Heart right ventricle (tissue), 16 donors: ENCODE measurements at regions of chrX and their contacts with region 1.

Region 1: DNA sequence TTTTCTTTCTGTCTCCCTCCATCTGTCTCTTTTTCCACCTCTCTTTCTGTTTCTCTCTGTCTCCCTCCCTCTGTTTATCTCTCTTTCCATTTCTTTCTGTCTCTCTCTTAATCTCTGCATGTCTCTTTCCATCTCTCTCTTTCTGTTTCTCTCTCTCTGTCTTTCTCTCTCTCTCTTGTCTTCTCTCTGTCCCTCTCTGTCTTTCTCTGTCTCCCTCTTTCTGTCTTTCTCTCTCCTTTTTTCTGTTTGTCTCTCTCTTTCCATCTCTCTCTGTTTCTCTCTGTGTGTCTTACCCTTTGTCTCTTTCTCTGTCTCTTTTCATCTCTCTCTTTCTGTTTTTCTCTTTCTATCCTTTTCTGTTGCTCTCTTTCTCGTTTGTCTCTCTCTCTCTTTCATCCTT is 34.7 kb downstream of the ARSF start:
- DNase-seq: no peak
- ATAC-seq: no peak
- H3K4me3 ChIP-seq: no peak overlapping the region
- H3K27ac ChIP-seq: no peak overlapping the region
- H3K4me1 ChIP-seq: no peaks in the 10 kb centered on the region
- H3K27me3 ChIP-seq: peaks cover 0 to 28% (median 0%) of the 10 kb centered on the region in 7 donors
- CTCF ChIP-seq: no peak

Region 2: DNA sequence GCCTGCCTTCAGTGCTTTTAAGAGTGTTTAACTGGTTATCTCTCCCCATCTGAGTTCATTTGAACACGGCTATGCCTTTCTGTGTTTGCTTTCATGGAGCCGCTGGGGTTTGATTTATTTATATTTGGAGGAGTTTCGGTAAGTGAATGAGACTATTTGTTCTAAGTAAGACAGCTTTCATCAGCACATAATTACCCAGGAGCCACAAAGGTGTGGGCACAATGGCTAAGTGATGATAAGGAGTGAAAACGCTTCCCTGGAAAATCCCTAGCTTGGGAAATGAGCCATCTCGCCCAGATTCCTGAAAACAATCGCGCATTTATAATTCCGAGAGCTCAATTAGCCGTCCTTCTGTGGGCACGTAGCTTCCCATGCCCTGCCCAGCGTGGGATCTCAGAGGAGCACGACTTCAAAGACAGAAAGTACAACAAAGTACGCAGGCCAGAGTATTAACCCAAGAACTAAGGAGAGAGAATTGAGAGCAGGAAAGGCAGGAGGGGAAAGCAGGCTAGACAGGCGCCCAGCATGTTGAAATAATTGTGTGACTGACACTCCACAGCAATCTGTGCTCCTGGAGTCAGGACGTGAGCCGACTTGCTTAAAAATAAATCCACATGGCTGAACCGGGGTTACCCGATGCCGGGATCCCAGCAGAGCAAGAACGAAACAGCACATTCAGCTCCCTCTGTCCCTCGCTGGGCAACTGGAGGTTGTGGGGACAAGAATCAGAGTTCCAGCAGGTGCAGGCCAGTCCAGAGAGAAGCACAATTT is 674.2 kb before region 1 on chrX:
- intact Hi-C with region 1: no loop called
- DNase-seq: peak; percentile 19 to 22
- ATAC-seq: peak; percentile 48 to 94 (median 82)
- H3K4me3 ChIP-seq: peak overlapping the region in 5 of 10 donors; percentile 8 to 40 (median 24)
- H3K27ac ChIP-seq: peak overlapping the region; percentile 32 to 78 (median 75)
- H3K4me1 ChIP-seq: peaks cover 0 to 11% (median 5%) of the 10 kb centered on the region in 9 donors
- H3K27me3 ChIP-seq: no peaks in the 10 kb centered on the region
- CTCF ChIP-seq: no peak

Region 3: GRCh38 chrX:3094261-3094660 is 18.3 kb after region 1 on chrX:
- intact Hi-C with region 1: loop called in 1 of 10 experiments (anchors 1 kb)
- DNase-seq: no peak
- ATAC-seq: no peak
- H3K4me3 ChIP-seq: no peak overlapping the region
- H3K27ac ChIP-seq: no peak overlapping the region
- H3K4me1 ChIP-seq: no peaks in the 10 kb centered on the region
- H3K27me3 ChIP-seq: no peaks in the 10 kb centered on the region
- CTCF ChIP-seq: no peak